ENCODE measurements at regions of chr16 and their contacts with region 1.

Region 1: GRCh38 chr16:914440-914839 is 56.3 kb downstream of the LMF1 start:
- DNase-seq: peak in 1 of 10 donors; percentile 79

Region 2: GRCh38 chr16:970766-971581 is 56.5 kb after region 1 on chr16 and contains the start of gene LMF1:
- intact Hi-C with region 1: loop called (anchors 10 kb)
- DNase-seq: peak; percentile 92 to 100 (median 96)

Region 3: GRCh38 chr16:1048442-1049112 is 134.1 kb after region 1 on chr16:
- intact Hi-C with region 1: loop called (anchors 5 kb)
- DNase-seq: peak; percentile 61 to 98 (median 84)